ENCODE measurements at regions of chr18 and their contacts with region 1.

Region 1: GRCh38 chr18:46660955-46661749 is 4.1 kb upstream of the LOXHD1 start:
- DNase-seq: no peak
- H3K4me3 ChIP-seq: no peak overlapping the region
- H3K27ac ChIP-seq: no peak overlapping the region
- H3K4me1 ChIP-seq: peaks cover 0 to 4% (median 0%) of the 10 kb centered on the region in 4 experiments
- H3K27me3 ChIP-seq: peaks cover 0 to 8% (median 0%) of the 10 kb centered on the region in 5 experiments

Region 2: GRCh38 chr18:46281185-46282176 is 379.7 kb before region 1 on chr18:
- CTCF ChIA-PET with region 1: interaction called, 70 read pairs
- POLR2A ChIA-PET with region 1: no interaction called
- DNase-seq: peak; percentile 66 to 83 (median 79)
- H3K4me3 ChIP-seq: no peak overlapping the region
- H3K27ac ChIP-seq: no peak overlapping the region
- H3K4me1 ChIP-seq: peaks cover 0 to 8% (median 2%) of the 10 kb centered on the region in 4 experiments
- H3K27me3 ChIP-seq: peaks cover 0 to 2% (median 0%) of the 10 kb centered on the region in 5 experiments

Region 3: DNA sequence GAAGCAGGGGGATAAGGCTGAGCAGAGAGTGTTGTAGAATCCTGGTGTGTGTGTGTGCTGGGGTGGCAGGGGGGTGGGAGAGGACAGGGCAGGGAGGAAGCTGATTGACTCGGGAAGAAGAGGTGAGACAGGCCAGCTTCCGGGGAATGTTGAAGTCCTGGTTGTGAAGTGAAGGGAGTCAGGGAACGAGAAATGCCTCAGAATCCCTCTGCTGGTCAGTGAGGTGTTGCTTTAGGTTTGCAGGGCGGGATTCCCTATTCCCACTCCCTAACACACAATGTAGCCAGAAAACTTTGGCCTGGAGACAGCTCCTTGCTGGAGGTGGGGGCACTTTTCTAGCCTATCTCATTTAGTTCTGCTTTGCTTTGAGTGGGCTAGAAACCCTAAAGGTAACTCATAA is 291.8 kb before region 1 on chr18:
- CTCF ChIA-PET with region 1: no interaction called
- POLR2A ChIA-PET with region 1: no interaction called
- DNase-seq: no peak
- H3K4me3 ChIP-seq: no peak overlapping the region
- H3K27ac ChIP-seq: no peak overlapping the region
- H3K4me1 ChIP-seq: peaks cover 0 to 2% (median 0%) of the 10 kb centered on the region in 4 experiments
- H3K27me3 ChIP-seq: peaks cover 0 to 2% (median 0%) of the 10 kb centered on the region in 5 experiments

Region 4: GRCh38 chr18:46555724-46556123 is 105.4 kb before region 1 on chr18:
- CTCF ChIA-PET with region 1: interaction called, 75 read pairs
- POLR2A ChIA-PET with region 1: no interaction called
- DNase-seq: peak; percentile 30 to 60 (median 50)
- H3K4me3 ChIP-seq: no peak overlapping the region
- H3K27ac ChIP-seq: no peak overlapping the region
- H3K4me1 ChIP-seq: no peaks in the 10 kb centered on the region
- H3K27me3 ChIP-seq: no peaks in the 10 kb centered on the region

Region 5: GRCh38 chr18:46649071-46649862 is 11.9 kb before region 1 on chr18:
- CTCF ChIA-PET with region 1: interaction called, 22 read pairs
- POLR2A ChIA-PET with region 1: no interaction called
- DNase-seq: no peak
- H3K4me3 ChIP-seq: no peak overlapping the region
- H3K27ac ChIP-seq: no peak overlapping the region
- H3K4me1 ChIP-seq: no peaks in the 10 kb centered on the region
- H3K27me3 ChIP-seq: peaks cover 0 to 3% (median 0%) of the 10 kb centered on the region in 5 experiments

Measured in common myeloid progenitor, CD34-positive (primary cell).